ENCODE measurements at regions of chr11 and their contacts with region 1.

Region 1: GRCh38 chr11:27720277-27720830 is 20.1 kb upstream of the BDNF start:
- DNase-seq: peak; percentile 53
- H3K4me3 Mint-ChIP-seq: peak overlapping the region; percentile 81
- H3K27ac Mint-ChIP-seq: no peak overlapping the region
- H3K4me1 Mint-ChIP-seq: peaks cover 14% of the 10 kb centered on the region
- H3K27me3 Mint-ChIP-seq: peaks cover 28% of the 10 kb centered on the region
- CTCF ChIP-seq: no peak

Region 2: GRCh38 chr11:27392278-27393114 is 327.9 kb before region 1 on chr11:
- CTCF ChIA-PET with region 1: no interaction called
- POLR2A ChIA-PET with region 1: no interaction called
- intact Hi-C with region 1: no loop called
- DNase-seq: peak; percentile 23
- H3K4me3 Mint-ChIP-seq: no peak overlapping the region
- H3K27ac Mint-ChIP-seq: peak overlapping the region; percentile 74
- H3K4me1 Mint-ChIP-seq: peaks cover 30% of the 10 kb centered on the region
- H3K27me3 Mint-ChIP-seq: no peaks in the 10 kb centered on the region
- CTCF ChIP-seq: no peak

Region 3: DNA sequence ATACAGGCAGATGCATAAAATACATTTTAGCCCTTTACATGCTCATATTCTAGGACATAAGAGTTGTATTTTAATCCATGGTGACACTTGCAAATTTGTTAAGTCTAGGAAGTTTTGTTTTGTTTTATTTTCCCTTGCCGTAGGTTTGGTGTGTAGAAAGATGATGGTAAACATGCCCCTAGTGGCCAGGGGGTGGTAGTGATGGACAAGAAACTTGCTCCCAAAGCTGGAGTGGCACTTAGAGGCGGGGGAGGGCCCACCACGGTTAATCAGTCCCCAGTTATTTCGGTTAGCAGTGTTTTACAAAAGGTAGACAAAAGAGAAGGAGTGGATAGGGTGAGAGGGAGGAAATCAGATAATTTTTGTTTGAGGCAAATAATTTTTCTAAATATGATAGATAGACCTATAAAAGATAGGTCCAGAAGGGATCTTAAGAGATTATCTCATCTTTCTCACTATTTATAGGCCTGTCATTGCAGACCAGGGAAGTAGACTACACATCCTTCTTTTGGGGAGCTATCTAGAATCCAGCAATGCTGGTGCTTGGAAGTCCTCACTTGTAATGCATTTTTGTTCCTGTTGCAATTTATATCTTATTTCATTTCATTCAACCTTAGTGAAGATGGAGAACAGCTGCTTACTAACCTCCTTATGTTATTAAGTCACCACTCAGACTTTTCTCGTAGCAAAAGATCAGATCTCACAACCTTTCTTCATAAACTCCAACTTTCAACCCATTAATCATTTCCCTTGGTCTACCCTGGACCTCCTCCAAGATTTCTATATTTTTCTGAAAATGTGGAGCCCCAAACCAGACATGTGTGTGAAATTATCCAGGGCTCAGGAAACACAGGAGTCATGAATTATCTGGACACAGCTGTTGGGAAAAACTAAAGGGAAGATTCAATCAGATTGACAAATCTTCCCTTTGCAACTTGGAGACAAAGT is 14.2 kb before region 1 on chr11:
- CTCF ChIA-PET with region 1: interaction called, 90 read pairs
- POLR2A ChIA-PET with region 1: interaction called, 68 read pairs
- intact Hi-C with region 1: no loop called
- DNase-seq: peak; percentile 50
- H3K4me3 Mint-ChIP-seq: no peak overlapping the region
- H3K27ac Mint-ChIP-seq: no peak overlapping the region
- H3K4me1 Mint-ChIP-seq: peaks cover 6% of the 10 kb centered on the region
- H3K27me3 Mint-ChIP-seq: no peaks in the 10 kb centered on the region
- CTCF ChIP-seq: peak; percentile 54

Region 4: GRCh38 chr11:27839226-27839870 is 119.0 kb after region 1 on chr11:
- CTCF ChIA-PET with region 1: interaction called, 11 read pairs
- POLR2A ChIA-PET with region 1: interaction called, 3 read pairs
- intact Hi-C with region 1: loop called (anchors 10 kb)
- DNase-seq: peak; percentile 28
- H3K4me3 Mint-ChIP-seq: no peak overlapping the region
- H3K27ac Mint-ChIP-seq: peak overlapping the region; percentile 67
- H3K4me1 Mint-ChIP-seq: peaks cover 7% of the 10 kb centered on the region
- H3K27me3 Mint-ChIP-seq: no peaks in the 10 kb centered on the region
- CTCF ChIP-seq: peak; percentile 43

Region 5: DNA sequence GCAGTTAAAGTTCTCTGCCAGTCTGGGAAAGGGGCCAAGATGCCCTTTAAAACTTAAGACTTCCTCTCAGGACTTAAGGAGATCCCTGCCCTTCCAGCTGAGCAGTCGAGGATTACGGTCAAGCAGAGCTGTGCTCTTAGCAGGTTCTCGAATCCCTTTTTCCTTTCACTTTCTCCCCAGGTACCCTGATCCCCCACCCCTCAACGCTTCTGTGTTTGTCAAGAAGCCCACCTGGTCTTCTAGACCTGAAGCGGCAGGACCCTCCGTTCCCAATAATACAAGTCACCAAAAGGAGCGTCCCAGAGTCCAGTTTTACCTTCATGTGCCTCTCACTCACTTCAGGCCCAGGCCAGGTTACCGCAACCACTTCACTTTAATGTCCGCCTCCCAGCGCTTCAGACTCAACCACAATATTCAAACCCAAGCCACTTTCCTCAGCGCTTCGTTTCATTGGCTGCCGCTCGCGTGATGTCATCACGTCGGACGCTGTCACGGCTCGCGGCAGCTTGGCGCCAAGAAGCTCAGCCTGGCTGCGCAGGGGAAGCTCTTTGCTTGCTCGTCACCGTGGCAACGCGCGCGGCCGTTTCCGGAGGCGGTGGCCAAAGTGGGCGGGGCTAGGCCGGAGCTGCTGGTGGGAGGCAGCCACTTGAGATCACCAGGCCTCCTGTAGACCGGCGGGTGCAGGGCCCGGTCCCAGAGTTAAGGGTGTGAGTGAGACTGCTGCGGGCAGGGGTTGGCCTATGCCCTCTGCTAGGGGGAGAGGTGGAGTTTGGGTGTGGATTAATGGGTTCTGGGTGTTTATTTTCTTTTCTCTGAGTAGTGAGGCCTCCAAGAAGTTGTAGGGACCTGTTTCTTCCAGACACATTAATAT is 387.6 kb after region 1 on chr11 and contains the starts of genes KIF18A and METTL15:
- CTCF ChIA-PET with region 1: interaction called, 19 read pairs
- POLR2A ChIA-PET with region 1: interaction called, 73 read pairs
- intact Hi-C with region 1: loop called (anchors 1 kb)
- DNase-seq: peak; percentile 98
- H3K4me3 Mint-ChIP-seq: peak within 1 kb of the TSS; percentile 98
- H3K27ac Mint-ChIP-seq: peak within 1 kb of the TSS; percentile 100
- H3K4me1 Mint-ChIP-seq: peaks cover 48% of the 10 kb centered on the region
- H3K27me3 Mint-ChIP-seq: no peaks in the 10 kb centered on the region
- CTCF ChIP-seq: no peak
- total RNA-seq, gene KIF18A: 8.9 and 12.9 TPM in 2 replicates
- total RNA-seq, gene METTL15: 16.8 and 19.9 TPM in 2 replicates

Region 6: DNA sequence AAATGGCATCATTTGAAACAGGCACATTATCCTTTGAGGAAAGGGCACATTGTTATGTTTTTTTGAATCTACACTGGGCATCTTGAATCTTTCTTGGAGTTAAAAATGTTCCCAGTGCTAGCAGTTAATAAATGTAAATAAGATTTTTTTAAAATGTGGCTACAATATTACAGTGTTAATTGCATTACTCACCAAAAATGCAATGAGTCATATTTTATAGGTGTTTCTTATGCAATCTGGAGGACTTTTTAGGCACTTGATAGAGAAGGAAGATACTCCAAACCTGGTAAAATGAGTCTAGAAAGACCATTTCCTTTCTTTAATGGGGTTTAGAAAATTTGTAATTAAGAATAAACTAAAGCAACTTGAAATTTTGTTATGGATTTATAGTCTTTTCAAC is 625.9 kb after region 1 on chr11:
- CTCF ChIA-PET with region 1: no interaction called
- POLR2A ChIA-PET with region 1: interaction called, 3 read pairs
- intact Hi-C with region 1: loop called (anchors 5 kb)
- DNase-seq: peak; percentile 60
- H3K4me3 Mint-ChIP-seq: no peak overlapping the region
- H3K27ac Mint-ChIP-seq: no peak overlapping the region
- H3K4me1 Mint-ChIP-seq: peaks cover 34% of the 10 kb centered on the region
- H3K27me3 Mint-ChIP-seq: no peaks in the 10 kb centered on the region
- CTCF ChIP-seq: no peak

Region 7: GRCh38 chr11:28697920-28698827 is 977.8 kb after region 1 on chr11:
- CTCF ChIA-PET with region 1: interaction called, 3 read pairs
- POLR2A ChIA-PET with region 1: no interaction called
- intact Hi-C with region 1: loop called (anchors 5 kb)
- DNase-seq: peak; percentile 79
- H3K4me3 Mint-ChIP-seq: no peak overlapping the region
- H3K27ac Mint-ChIP-seq: peak overlapping the region; percentile 36
- H3K4me1 Mint-ChIP-seq: peaks cover 41% of the 10 kb centered on the region
- H3K27me3 Mint-ChIP-seq: no peaks in the 10 kb centered on the region
- CTCF ChIP-seq: peak; percentile 76

Region 8: DNA sequence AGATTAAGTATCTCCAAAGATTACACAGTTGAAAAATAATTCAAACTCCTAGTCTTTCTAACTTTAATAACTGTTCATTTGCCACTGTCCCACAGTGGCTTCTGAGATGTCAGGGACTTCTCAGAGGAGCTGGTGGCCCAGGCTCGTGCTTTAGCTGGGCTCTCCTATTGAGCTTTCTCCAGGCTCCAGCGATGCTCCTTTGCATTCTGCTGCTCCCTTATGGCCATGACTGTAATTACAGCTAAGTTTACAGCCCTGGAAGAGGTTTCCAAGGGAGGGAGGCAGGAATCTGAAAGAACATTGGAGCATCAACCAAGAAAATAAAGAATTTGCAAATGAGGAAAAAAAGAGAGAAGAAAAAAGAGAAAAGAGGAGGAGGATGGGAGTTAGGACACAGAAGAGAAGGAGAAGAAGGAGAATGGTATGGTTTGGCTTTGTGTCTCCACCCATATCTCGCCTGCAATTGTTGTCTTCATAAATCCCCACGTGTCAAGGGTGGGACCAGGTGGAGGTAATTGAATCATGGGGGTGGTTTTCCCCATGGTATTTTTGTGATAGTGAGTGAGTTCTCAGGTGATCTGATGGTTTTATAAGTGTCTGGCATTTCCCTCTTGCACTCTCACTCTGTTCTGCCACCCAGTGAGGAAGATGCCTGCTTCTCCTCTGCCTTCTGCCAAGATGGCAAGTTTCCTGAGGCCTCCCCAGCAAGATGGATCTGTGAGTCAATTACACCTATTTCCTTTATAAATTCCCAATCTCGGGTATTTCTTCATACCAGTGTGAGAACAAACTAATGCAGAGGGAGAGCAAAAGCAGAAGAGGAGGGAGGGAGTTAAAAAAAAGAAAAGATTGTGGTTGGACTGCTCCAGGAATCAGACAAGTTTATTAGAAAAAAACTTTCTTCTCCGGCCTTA is 1439.5 kb after region 1 on chr11:
- CTCF ChIA-PET with region 1: interaction called, 10 read pairs
- POLR2A ChIA-PET with region 1: no interaction called
- intact Hi-C with region 1: loop called (anchors 5 kb)
- DNase-seq: peak; percentile 80
- H3K4me3 Mint-ChIP-seq: no peak overlapping the region
- H3K27ac Mint-ChIP-seq: no peak overlapping the region
- H3K4me1 Mint-ChIP-seq: peaks cover 11% of the 10 kb centered on the region
- H3K27me3 Mint-ChIP-seq: no peaks in the 10 kb centered on the region
- CTCF ChIP-seq: peak; percentile 77

Measured in MCF 10A (cell line).